Psoas muscle (tissue), 8 donors: ENCODE measurements at regions of chr15 and their contacts with region 1.

Region 1: DNA sequence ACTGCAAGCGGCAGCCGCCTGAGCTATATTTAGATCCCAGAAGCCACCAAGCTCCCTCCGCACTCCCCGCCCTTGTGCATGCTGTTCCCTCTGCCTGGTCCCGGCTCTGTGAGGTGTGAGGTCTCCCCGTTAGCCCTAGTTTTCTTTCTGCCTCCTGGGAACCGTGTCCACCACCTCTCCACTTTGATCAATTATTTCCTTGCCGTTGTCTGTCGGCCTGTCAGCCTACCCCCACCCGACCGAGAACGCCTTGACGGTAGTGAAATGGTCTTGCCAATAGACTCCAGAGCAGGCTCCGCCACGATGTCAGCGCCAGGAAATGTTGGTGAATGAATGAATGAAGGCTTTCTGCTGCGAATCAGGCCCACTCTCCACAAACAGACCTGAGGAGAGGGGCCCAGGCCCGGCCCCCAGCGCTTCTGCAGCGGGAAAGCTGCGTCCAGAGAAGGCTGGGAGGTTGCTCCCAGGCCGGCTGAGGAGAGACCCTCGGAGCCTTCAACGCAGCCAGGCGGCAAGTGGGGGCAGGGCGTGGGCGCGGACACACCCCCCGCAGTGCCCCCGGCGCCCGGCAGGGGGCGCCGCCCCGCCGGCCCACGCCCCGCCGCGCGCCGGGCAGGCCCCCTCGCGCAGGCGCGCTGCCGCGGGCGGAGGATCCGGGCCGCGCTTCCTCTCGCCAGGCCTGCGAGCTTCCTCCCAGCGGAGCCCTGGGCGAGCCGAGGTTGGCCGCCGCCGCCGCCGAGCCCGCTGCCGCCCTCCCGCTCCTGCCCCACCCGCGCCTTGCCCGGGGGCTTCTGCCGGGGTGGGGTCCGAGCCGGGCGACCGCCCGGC is at the start of gene CSK:
- DNase-seq: peak; percentile 82 to 90
- ATAC-seq: peak; percentile 69 to 72 (median 70)
- H3K4me3 ChIP-seq: peak within 1 kb of the TSS; percentile 86
- H3K27ac ChIP-seq: peak within 1 kb of the TSS; percentile 79
- H3K4me1 ChIP-seq: peaks cover 47% of the 10 kb centered on the region
- H3K27me3 ChIP-seq: no peaks in the 10 kb centered on the region
- CTCF ChIP-seq: peak; percentile 85
- total RNA-seq, gene CSK: 15.5 to 23.8 (median 17.9) TPM

Region 2: GRCh38 chr15:74680456-74680855 is 101.2 kb before region 1 on chr15:
- intact Hi-C with region 1: no loop called
- DNase-seq: no peak
- ATAC-seq: no peak
- H3K4me3 ChIP-seq: no peak overlapping the region
- H3K27ac ChIP-seq: no peak overlapping the region
- H3K4me1 ChIP-seq: no peaks in the 10 kb centered on the region
- H3K27me3 ChIP-seq: no peaks in the 10 kb centered on the region
- CTCF ChIP-seq: no peak

Region 3: DNA sequence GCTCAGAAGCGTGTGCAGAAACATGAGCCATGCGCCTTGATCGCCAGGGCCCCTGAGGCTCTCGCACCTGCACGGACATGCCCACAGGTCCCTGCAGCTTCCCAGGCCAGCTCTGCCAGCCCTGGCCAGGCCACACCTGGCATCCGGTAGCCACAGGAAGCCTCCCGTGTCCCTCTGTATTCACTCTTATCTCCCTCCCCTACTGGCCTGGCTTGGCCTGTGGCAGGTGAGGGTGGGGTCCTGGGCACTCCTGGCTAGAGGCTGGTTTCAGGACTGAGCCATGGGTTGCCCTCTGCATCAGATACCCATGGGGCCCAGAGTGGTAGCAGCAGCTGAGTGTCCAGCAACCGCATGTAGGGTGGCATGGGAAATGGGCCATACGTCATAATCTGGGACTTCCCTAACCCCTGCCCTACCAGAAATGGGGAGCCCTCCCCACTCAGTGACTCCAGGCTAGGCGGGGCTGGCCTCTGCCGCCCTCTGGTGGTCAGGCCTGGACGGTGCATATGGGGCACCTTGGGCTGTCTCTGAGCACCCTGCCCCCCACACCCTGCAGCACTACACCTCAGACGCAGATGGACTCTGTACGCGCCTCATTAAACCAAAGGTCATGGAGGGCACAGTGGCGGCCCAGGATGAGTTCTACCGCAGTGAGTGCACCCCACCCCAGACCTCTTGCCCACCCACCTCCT is 18.4 kb after region 1 on chr15:
- intact Hi-C with region 1: loop called (anchors 1 to 2 kb)
- DNase-seq: peak; percentile 82 to 90
- ATAC-seq: peak; percentile 87 to 90 (median 87)
- H3K4me3 ChIP-seq: no peak overlapping the region
- H3K27ac ChIP-seq: peak overlapping the region; percentile 65
- H3K4me1 ChIP-seq: peaks cover 21% of the 10 kb centered on the region
- H3K27me3 ChIP-seq: no peaks in the 10 kb centered on the region
- CTCF ChIP-seq: peak; percentile 97

Region 4: GRCh38 chr15:74835307-74835823 is 53.7 kb after region 1 on chr15:
- intact Hi-C with region 1: loop called in 1 of 2 experiments (anchors 5 kb)
- DNase-seq: peak; percentile 59 to 80
- ATAC-seq: peak; percentile 46 to 78 (median 68)
- H3K4me3 ChIP-seq: no peak overlapping the region
- H3K27ac ChIP-seq: no peak overlapping the region
- H3K4me1 ChIP-seq: peaks cover 17% of the 10 kb centered on the region
- H3K27me3 ChIP-seq: no peaks in the 10 kb centered on the region
- CTCF ChIP-seq: peak; percentile 74

Region 5: DNA sequence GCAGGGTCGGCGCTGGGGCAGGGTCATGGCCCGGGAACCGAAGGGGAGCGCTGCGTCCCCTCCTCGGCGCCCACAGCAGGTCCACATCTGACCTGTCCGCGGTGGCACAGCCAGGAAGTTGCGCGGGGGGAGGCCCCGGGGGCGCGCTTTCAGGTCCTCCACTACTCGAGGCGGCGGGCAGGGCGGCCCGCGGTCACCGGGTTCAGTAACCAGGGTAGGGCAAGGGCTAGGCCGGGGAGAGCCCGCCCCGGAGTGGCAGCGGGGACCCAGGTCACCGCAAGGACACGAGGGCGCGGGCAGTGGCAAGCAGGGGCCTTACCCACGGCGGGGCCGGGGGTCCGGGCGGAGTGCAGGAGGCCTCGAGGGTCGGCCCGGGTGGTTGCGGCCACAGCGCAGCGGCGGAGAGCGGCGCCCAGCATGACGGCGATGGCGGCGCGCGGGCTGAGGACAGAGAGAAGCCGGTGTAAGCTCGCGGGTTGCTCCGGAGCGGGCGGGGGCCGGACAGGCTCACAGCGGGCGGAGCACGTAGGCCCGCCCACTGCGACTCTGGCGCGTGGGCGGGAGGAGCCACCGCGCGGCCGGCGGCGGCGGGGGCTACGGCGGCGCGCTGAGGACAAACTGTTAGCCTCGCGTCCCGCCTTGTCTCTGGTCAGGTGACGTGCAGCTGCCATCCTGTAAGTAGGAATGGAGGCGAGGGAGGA is 156.1 kb after region 1 on chr15 and contains the start of gene COX5A:
- intact Hi-C with region 1: loop called in 1 of 2 experiments (anchors 5 kb)
- DNase-seq: peak; percentile 95 to 97
- ATAC-seq: peak; percentile 95 to 98 (median 96)
- H3K4me3 ChIP-seq: peak within 1 kb of the TSS; percentile 99
- H3K27ac ChIP-seq: peak within 1 kb of the TSS; percentile 99
- H3K4me1 ChIP-seq: peaks cover 30% of the 10 kb centered on the region
- H3K27me3 ChIP-seq: no peaks in the 10 kb centered on the region
- CTCF ChIP-seq: no peak
- total RNA-seq, gene COX5A: 635 to 910 (median 767) TPM

Region 6: GRCh38 chr15:74964794-74965193 is 183.1 kb after region 1 on chr15:
- intact Hi-C with region 1: no loop called
- DNase-seq: no peak
- ATAC-seq: no peak
- H3K4me3 ChIP-seq: no peak overlapping the region
- H3K27ac ChIP-seq: no peak overlapping the region
- H3K4me1 ChIP-seq: no peaks in the 10 kb centered on the region
- H3K27me3 ChIP-seq: peaks cover 0 to 2% (median 2%) of the 10 kb centered on the region in 3 donors
- CTCF ChIP-seq: no peak